ENCODE measurements at regions of chr1 and their contacts with region 1.

Region 1: GRCh38 chr1:170967042-170967910 is 31.9 kb downstream of the MROH9 start:
- DNase-seq: no peak
- ATAC-seq: peak; percentile 86
- H3K4me3 Mint-ChIP-seq: no peak overlapping the region
- H3K27ac Mint-ChIP-seq: no peak overlapping the region
- H3K4me1 Mint-ChIP-seq: no peaks in the 10 kb centered on the region
- H3K27me3 Mint-ChIP-seq: no peaks in the 10 kb centered on the region
- CTCF ChIP-seq: peak; percentile 27; the same call in 1 of the 2 replicates

Region 2: DNA sequence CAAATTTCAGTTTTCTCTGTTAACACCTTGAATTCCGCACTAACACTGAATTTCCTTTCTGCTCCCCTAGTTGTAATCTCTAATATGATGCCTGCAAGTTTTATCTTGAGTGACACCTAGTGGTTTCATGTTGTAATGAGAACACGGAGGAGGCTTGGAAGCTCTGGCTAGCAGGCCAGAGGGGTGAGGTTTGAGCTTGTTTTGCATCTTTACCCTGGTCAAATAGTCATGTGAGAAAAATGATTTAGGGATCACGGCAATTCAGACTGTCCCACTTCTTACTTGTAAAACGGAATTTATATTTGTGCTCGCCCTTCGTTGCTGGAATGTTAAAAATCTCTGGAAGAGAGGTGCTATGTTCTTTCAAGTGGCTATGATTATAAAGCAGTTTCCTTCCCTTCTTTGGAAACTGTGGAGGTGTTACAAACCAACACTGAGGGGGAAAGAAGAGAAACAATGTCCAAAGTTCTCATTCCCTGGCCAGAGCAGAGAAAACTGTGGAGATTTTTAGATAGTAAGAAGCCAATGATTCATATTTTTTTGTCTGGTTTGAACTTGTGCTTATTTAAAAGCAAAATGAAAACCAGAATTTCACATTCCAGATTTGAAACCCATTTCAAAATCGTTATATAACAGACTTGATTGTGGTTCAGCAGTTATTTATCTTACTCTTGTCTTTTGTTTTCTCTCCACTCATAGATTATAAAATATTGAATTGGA is 37.3 kb before region 1 on chr1:
- CTCF ChIA-PET with region 1: interaction called, 20 read pairs
- POLR2A ChIA-PET with region 1: no interaction called
- DNase-seq: no peak
- ATAC-seq: peak; percentile 95
- H3K4me3 Mint-ChIP-seq: no peak overlapping the region
- H3K27ac Mint-ChIP-seq: no peak overlapping the region
- H3K4me1 Mint-ChIP-seq: peaks cover 24% of the 10 kb centered on the region
- H3K27me3 Mint-ChIP-seq: no peaks in the 10 kb centered on the region; the same call in 1 of the 2 replicates
- CTCF ChIP-seq: peak; percentile 61

Region 3: DNA sequence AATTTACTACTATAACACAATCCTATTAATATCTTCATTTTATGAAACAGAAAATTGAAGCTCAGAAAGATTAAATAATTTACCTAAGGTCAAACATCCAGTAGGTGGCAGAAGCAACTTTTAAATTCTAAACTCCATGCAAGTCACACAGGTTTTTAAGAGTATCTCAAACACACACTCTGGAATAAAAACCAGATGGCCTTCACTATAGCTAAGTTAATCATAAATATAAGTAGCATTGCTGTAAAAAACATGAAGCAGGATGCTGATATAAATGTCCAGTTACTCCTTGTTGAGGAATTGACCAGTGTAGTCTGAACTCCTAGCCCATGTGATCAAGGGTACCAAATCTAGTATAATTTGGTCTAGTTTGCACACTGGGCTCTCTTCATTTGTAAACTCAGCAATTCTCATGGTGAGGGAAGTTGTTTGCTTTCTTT is 114.1 kb after region 1 on chr1:
- CTCF ChIA-PET with region 1: interaction called, 13 read pairs
- POLR2A ChIA-PET with region 1: no interaction called
- DNase-seq: no peak
- ATAC-seq: no peak
- H3K4me3 Mint-ChIP-seq: no peak overlapping the region
- H3K27ac Mint-ChIP-seq: no peak overlapping the region; the same call in 1 of the 2 replicates
- H3K4me1 Mint-ChIP-seq: peaks cover 5% of the 10 kb centered on the region
- H3K27me3 Mint-ChIP-seq: no peaks in the 10 kb centered on the region
- CTCF ChIP-seq: no peak

Region 4: DNA sequence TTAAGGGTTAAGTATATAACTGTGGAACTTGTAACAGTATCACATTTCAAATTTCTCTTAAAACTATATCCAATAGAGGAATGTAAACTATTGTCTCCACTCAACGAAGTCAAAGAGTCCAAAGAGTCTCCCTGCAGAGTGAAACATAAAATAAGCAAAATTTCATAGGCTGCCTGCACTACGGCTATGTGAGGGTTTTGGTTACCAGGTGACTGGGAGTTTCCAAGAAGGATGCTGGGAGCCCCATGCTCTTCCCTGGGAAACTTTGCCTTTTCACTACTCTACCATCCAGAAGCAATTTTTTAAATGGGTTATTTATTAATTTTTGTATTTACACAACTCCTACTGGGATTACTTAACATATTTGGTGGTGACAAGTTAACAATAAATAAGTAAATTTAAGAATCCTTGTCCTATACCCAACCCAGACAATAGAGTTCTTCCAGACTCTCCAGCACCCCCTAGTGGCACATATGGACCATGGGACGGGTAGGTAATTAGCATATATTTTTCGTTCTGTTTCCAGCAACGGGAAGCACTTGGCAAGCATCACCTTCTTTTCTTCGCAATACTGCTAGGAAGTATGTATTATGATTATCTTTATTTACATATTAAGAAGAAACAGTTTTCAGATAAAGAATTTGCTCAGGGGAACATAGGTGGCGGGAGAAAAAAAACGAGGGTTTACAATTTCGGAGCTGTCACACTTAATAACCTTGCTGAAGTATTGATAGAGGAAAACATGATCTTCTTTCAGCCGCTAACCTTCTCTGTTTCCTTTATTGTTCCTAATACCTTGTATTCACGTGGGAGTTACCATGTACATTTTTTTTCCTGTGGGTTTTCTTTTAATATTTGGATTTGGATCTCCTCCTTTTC is 221.4 kb after region 1 on chr1:
- CTCF ChIA-PET with region 1: interaction called, 12 read pairs
- POLR2A ChIA-PET with region 1: no interaction called
- DNase-seq: peak; percentile 57
- ATAC-seq: peak; percentile 95
- H3K4me3 Mint-ChIP-seq: no peak overlapping the region
- H3K27ac Mint-ChIP-seq: no peak overlapping the region
- H3K4me1 Mint-ChIP-seq: peaks cover 7% of the 10 kb centered on the region
- H3K27me3 Mint-ChIP-seq: no peaks in the 10 kb centered on the region
- CTCF ChIP-seq: peak; percentile 82

Region 5: DNA sequence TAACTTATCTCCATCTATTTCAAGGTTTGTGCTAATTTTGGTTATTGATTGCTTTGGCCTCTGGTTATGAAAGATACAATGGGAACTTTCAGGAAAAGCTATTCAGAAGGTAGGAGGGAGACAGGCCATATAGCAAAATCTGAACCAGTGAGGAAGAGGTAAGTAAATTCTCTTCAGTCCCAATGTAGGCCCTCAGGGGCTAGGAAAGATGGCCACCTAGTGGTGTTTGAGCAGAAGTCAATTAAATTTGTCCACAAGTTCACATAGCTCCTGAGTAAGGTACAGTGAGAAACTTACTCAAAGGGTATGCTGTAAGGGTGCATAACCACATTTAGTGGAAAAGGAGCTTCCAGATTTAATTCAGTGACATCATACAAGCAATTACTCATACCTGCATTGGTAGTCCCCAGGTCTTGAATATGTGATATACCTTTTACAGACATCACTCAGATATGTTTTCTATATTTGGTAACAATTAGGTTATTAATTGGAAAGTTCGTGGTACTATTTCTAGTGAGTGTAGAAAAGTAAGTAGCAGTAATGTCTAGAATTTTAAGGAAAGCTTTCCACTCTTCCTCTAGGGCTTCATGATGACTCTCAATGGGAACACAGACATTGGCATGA is 259.6 kb after region 1 on chr1:
- CTCF ChIA-PET with region 1: interaction called, 59 read pairs
- POLR2A ChIA-PET with region 1: no interaction called
- DNase-seq: peak; percentile 53
- ATAC-seq: peak; percentile 87
- H3K4me3 Mint-ChIP-seq: no peak overlapping the region
- H3K27ac Mint-ChIP-seq: no peak overlapping the region
- H3K4me1 Mint-ChIP-seq: peaks cover 32% of the 10 kb centered on the region
- H3K27me3 Mint-ChIP-seq: no peaks in the 10 kb centered on the region
- CTCF ChIP-seq: peak; percentile 60

Measured in WTC11 (cell line).